Activated CD4-positive, alpha-beta T cell treated with anti-CD3 and anti-CD28 coated beads, Interleukin-2, amount 10 ng/mL, durations not matched to agents 24 days and 14 days (primary cell): ENCODE measurements at regions of chr1 and their contacts with region 1.

Region 1: DNA sequence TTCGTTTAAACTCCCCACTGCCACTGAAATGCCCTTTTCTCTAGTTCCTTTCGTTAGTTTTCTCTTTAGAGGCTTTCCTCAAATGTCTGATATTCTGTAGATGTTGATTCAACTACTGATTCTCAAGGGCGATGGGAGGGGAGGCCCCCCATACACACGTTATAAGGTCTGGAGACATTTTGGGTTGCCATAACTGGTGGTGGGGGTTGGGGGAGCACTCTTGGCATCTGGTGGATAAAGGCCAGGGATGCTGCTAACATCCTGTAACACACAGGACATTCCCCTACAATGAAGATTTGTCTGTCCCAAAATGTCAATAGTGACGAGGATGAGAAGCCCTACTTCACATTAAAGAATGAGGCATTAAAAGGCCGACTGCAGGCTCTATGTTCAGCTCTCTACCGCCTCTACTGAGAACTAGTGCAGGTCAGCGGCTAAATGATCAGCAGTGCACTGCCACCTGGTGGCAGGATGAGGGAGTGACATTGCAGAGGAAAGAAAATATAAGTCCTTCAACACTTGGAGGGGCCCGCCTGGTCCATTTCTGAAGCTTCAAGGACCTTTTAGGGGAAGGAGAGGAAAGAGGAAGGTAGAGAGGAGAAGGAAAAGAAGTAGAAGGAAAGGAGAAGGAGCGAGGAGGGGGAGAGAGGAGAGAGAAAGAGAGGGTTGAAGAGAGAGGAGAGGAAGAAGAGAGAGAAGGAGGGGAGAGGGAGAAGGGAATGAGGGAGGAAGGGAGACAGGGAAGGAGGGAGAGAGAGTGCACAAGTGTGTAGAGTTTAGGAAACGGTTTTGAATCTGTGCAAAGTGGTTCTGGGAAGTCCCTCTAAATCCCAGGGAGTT is 29.4 kb downstream of the ALG14 start:
- DNase-seq: peak; percentile 93
- H3K4me3 Mint-ChIP-seq: no peak overlapping the region
- H3K27ac Mint-ChIP-seq: no peak overlapping the region
- H3K4me1 Mint-ChIP-seq: no peaks in the 10 kb centered on the region
- H3K27me3 Mint-ChIP-seq: no peaks in the 10 kb centered on the region

Region 2: DNA sequence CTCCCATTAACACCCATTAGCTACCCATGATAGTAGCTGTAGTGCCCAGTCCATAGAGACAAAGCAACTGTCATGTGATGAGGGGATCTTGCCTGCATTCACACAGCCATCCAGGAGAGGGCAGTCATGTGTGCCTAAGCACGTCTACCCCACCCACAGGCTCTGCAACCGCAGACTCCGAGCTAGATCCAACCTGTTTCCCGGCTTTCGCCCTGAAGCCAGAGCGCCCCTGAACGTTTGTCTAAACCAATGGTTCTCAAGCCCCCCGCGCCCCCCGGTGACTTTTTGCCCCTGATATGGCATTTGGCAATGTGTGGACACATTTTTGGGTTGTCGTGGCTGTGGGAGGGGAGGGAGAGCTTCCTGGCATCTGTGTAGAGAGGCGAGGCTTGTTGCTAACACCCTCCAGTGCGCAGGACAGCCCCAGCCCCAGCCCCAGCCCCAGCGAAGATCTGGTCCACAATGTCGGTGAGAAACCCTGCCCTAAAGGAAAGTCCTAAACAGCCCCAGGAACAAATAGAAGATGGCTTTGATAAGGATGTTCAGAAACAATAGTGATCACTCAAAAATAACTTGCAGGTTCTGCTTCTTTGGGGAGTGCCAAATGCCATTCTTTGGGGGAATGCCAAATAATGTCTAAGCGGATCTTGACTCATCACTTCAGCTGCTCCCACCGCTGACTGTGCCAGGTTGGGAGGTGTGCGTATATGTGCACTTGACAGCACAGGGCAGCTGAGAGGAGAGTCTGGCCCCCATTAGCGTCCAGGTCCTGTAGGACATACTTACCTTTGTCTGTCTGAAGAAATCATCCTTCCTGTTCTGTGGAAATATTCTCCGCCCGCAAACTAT is 188.7 kb before region 1 on chr1:
- intact Hi-C with region 1: loop called (anchors 1 kb)
- DNase-seq: peak; percentile 93
- H3K4me3 Mint-ChIP-seq: no peak overlapping the region
- H3K27ac Mint-ChIP-seq: no peak overlapping the region
- H3K4me1 Mint-ChIP-seq: no peaks in the 10 kb centered on the region
- H3K27me3 Mint-ChIP-seq: peaks cover 5% of the 10 kb centered on the region

Region 3: DNA sequence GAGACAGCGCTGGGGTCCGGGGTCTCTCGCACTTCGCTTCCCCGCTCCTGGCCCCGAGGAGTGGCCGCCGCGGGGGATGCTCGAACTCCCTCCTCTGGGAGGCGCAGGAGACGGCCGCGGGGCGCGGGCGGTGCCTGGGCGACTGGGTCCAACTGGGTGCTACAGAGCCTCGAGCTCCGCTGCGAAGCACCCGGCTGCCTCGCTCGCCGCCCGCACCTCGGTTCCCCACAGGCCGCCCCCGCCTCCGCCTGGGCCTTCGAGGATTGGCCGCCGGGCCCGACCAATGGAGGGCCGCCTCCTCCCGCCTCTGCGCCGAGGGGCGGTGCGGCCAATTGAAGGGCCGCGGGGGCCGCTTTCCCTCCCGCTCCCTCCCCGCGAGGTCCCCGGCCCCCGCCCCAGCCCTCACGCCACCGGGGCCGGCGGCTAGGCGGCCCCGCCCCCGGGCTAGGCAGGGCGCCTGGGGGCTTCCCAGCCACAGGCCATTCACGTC is 116.4 kb before region 1 on chr1 and contains the start of gene CNN3:
- intact Hi-C with region 1: loop called (anchors 10 kb)
- DNase-seq: peak; percentile 89
- H3K4me3 Mint-ChIP-seq: peak within 1 kb of the TSS; percentile 83
- H3K27ac Mint-ChIP-seq: peak within 1 kb of the TSS; percentile 36
- H3K4me1 Mint-ChIP-seq: peaks cover 10% of the 10 kb centered on the region
- H3K27me3 Mint-ChIP-seq: peaks cover 52% of the 10 kb centered on the region
- total RNA-seq, gene CNN3: 2.5 and 2.7 TPM in 2 replicates

Region 4: GRCh38 chr1:95013950-95014574 is 29.3 kb before region 1 on chr1:
- intact Hi-C with region 1: no loop called
- DNase-seq: no peak
- H3K4me3 Mint-ChIP-seq: no peak overlapping the region
- H3K27ac Mint-ChIP-seq: no peak overlapping the region
- H3K4me1 Mint-ChIP-seq: no peaks in the 10 kb centered on the region
- H3K27me3 Mint-ChIP-seq: no peaks in the 10 kb centered on the region

Region 5: DNA sequence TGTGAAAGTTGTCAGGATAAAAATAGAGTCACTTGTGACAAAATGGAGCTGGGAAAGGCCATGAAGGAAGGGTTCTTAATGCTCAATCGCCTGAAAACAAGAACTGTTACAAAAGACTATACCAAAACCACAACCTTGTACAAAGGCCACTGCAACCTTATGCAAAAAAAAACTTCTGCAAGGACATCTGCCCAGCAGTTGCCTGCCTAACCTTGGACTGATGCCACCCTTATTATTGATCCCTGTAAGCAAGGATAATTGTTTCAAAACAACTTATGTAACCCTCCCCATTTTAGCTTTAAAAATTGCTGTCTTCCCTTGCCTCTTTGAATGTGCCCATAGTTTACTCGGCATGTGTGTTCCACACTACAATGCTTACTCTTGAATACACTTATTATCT is 23.7 kb after region 1 on chr1:
- intact Hi-C with region 1: loop called (anchors 1 kb)
- DNase-seq: no peak
- H3K4me3 Mint-ChIP-seq: no peak overlapping the region
- H3K27ac Mint-ChIP-seq: no peak overlapping the region
- H3K4me1 Mint-ChIP-seq: peaks cover 10% of the 10 kb centered on the region
- H3K27me3 Mint-ChIP-seq: no peaks in the 10 kb centered on the region

Region 6: GRCh38 chr1:95108792-95109191 is 65.4 kb after region 1 on chr1:
- intact Hi-C with region 1: no loop called
- DNase-seq: no peak
- H3K4me3 Mint-ChIP-seq: no peak overlapping the region
- H3K27ac Mint-ChIP-seq: no peak overlapping the region
- H3K4me1 Mint-ChIP-seq: no peaks in the 10 kb centered on the region
- H3K27me3 Mint-ChIP-seq: peaks cover 13% of the 10 kb centered on the region